PC-3 (cell line): ENCODE measurements at regions of chr11 and their contacts with region 1.

Region 1: DNA sequence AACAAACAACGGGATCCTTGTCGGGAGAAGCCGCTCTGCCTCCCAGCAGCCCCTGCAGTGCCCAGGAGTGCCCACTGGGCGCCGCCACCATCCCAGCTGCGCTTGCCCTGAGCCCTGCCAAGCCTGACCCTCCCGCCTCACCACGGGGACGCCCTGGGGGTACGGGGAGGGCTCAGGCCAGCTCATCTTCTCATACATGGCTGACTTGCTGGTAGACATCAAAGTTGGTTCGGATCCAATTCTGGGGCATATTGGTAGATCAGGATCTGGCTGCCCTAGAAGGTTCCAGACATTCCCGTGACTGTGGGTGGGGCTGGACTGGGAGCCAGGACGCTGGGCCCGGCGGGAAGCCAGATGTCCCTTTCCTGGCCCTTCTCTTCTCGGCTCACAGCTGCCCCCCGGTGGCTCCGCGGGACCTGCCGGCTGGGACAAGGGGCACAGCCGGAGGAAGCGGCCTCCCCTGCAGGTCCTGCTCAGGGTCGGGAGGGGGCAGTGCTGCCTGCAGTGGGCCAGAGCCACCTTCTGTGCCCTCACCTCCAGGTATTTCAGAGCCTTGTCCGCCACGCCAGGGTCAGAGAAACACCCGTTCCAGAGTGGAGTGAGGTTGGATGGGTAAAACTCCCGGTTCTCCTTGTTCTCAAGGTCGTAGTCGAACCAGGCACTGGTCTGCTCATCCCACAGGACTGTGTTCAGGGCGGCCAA is 10.6 kb upstream of the TREH start:
- DNase-seq: peak; percentile 97
- ATAC-seq: peak; percentile 93
- H3K4me3 ChIP-seq: peak overlapping the region; percentile 66
- H3K27ac ChIP-seq: peak overlapping the region; percentile 37; the same call in 1 of the 2 replicates
- H3K4me1 ChIP-seq: peaks cover 10% of the 10 kb centered on the region; the same call in 1 of the 2 replicates
- H3K27me3 ChIP-seq: no peaks in the 10 kb centered on the region
- CTCF ChIP-seq: peak; percentile 97

Region 2: DNA sequence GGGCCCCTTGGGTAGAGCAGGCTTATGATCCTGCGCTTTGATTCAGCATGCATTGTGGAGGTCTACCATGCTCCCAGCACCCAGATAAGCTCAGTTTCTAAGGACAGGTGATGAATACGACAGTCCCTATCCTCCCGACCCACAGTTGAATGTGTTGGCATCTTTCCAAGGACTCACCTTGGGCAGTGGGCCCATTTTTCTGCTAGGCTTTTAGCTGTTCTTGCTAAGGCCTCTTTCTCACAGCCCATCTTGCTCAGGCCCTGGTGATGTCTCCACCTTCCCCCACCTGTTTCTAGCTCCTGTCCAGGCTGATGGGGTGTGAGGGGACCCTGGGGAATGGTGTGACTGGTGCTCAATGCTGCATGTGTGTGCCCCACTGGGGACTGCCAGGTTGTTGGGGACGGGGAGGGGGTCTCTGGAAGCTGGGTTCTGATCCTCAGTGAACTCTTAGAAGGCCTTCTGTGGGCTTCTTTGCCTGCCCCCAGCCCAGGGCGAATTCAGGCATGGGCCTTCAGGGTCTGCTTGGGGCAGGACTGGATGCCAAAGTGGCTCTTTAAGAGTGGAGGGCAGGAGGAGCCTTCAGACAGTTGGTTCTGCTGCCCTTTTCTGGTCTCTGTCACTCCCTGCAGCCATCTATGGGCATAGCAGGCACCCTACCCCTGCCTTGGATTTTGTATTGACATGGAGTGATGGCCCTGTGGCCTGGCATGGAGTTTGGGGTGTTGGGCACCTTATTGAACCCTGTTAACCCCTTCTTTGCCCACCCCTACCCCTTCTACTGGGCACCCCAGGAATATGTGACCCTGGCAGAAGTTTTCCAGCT is 49.5 kb before region 1 on chr11:
- CTCF ChIA-PET with region 1: no interaction called
- POLR2A ChIA-PET with region 1: no interaction called
- intact Hi-C with region 1: no loop called
- DNase-seq: peak; percentile 32
- ATAC-seq: peak; percentile 70
- H3K4me3 ChIP-seq: no peak overlapping the region
- H3K27ac ChIP-seq: no peak overlapping the region
- H3K4me1 ChIP-seq: no peaks in the 10 kb centered on the region; the same call in 1 of the 2 replicates
- H3K27me3 ChIP-seq: no peaks in the 10 kb centered on the region
- CTCF ChIP-seq: peak; percentile 52; the same call in 1 of the 2 replicates

Region 3: GRCh38 chr11:118757876-118758399 is 67.9 kb after region 1 on chr11:
- CTCF ChIA-PET with region 1: no interaction called
- POLR2A ChIA-PET with region 1: no interaction called
- intact Hi-C with region 1: loop called (anchors 2 kb)
- DNase-seq: no peak
- ATAC-seq: no peak
- H3K4me3 ChIP-seq: no peak overlapping the region
- H3K27ac ChIP-seq: no peak overlapping the region
- H3K4me1 ChIP-seq: no peaks in the 10 kb centered on the region
- H3K27me3 ChIP-seq: no peaks in the 10 kb centered on the region
- CTCF ChIP-seq: no peak

Region 4: DNA sequence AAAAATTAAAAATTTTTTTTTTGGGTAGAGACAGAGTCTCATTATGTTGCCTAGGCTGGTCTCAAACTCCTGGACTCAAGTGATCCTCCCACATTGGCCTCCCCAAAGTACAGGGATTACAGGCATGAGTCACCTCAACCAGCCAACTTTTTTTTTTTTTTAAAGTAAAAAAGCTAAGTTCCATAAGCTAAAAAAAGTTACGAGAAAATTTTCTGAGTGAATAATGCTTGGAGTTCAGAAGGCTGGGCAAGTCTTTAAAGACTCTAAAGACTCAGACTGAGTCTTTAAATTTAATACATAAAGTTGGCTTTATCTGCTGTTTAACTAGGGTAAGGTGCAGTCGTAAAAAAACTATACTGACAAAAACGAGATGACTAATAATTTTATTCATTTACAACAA is 95.4 kb after region 1 on chr11:
- CTCF ChIA-PET with region 1: interaction called, 8 read pairs
- POLR2A ChIA-PET with region 1: no interaction called
- intact Hi-C with region 1: loop called (anchors 1 kb)
- DNase-seq: peak; percentile 80
- ATAC-seq: peak; percentile 82
- H3K4me3 ChIP-seq: no peak overlapping the region
- H3K27ac ChIP-seq: peak overlapping the region; percentile 64
- H3K4me1 ChIP-seq: peaks cover 38% of the 10 kb centered on the region
- H3K27me3 ChIP-seq: no peaks in the 10 kb centered on the region
- CTCF ChIP-seq: no peak

Region 5: DNA sequence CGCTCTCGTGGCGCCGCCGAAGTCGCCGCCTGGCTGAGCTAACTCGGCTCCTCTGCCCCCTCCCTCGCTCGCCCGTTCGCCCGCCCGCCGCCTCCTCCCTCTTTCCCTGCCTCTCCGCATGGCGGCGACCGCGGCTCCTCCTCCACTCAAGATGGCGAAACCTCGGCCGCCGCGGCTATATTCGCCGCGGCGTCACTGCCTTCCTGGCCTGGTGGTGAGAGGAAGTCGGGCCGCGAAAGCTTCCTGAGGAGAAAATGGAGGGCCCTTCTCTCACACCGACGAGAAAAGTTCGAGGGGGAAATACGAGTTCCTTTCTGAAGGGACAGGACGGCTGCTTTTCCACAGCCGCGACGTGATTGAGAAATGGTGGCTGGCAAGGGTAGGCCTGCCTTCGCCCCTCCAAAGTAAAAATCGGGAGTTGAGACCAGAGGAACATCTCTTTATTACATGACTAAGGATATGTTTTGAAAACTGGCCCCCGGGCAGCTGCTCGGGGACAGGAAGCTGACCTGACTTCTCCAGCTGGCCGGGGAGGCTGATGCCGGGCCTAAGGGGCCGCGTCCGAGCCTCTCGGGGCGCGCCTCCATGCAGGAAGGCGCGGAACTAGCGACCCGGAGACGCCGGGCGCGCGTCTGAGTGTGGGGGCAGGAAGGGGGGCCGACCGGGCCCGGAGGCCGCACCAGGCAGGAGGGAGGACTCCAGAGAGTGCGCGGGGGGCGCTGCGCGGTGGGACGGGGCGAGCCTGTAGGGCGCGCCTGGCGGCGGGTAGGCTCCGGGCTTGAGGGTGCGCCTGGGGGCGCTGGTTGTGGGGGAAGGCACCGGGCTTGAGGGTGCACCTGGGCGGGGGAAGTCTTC is 101.3 kb after region 1 on chr11 and contains the start of gene DDX6:
- CTCF ChIA-PET with region 1: interaction called, 6 read pairs
- POLR2A ChIA-PET with region 1: no interaction called
- intact Hi-C with region 1: loop called (anchors 2 kb)
- DNase-seq: peak; percentile 75
- ATAC-seq: peak; percentile 65
- H3K4me3 ChIP-seq: peak within 1 kb of the TSS; percentile 88
- H3K27ac ChIP-seq: peak within 1 kb of the TSS; percentile 81
- H3K4me1 ChIP-seq: peaks cover 31% of the 10 kb centered on the region
- H3K27me3 ChIP-seq: no peaks in the 10 kb centered on the region
- CTCF ChIP-seq: peak; percentile 26
- total RNA-seq, gene DDX6: 59.4 and 66.3 TPM in 2 replicates

Region 6: GRCh38 chr11:118956094-118956846 is 266.3 kb after region 1 on chr11 and contains the start of gene UPK2:
- CTCF ChIA-PET with region 1: interaction called, 5 read pairs
- POLR2A ChIA-PET with region 1: no interaction called
- intact Hi-C with region 1: loop called (anchors 1 kb)
- DNase-seq: peak; percentile 97
- ATAC-seq: peak; percentile 99
- H3K4me3 ChIP-seq: no peak within 1 kb of the TSS
- H3K27ac ChIP-seq: no peak within 1 kb of the TSS
- H3K4me1 ChIP-seq: peaks cover 8% of the 10 kb centered on the region; the same call in 1 of the 2 replicates
- H3K27me3 ChIP-seq: no peaks in the 10 kb centered on the region
- CTCF ChIP-seq: peak; percentile 99
- total RNA-seq, gene UPK2: 0.44 TPM in 1 of 2 replicates, not detected in the other

Region 7: GRCh38 chr11:119356349-119357031 is 666.5 kb after region 1 on chr11:
- CTCF ChIA-PET with region 1: no interaction called
- POLR2A ChIA-PET with region 1: no interaction called
- intact Hi-C with region 1: no loop called
- DNase-seq: peak; percentile 70
- ATAC-seq: peak; percentile 41
- H3K4me3 ChIP-seq: peak overlapping the region; percentile 68
- H3K27ac ChIP-seq: no peak overlapping the region
- H3K4me1 ChIP-seq: peaks cover 23% of the 10 kb centered on the region
- H3K27me3 ChIP-seq: no peaks in the 10 kb centered on the region
- CTCF ChIP-seq: peak; percentile 92